PC-3 (cell line): ENCODE measurements at regions of chr19 and their contacts with region 1.

Region 1: GRCh38 chr19:44002566-44003460 is at the start of gene ZNF230:
- DNase-seq: peak; percentile 93
- ATAC-seq: peak; percentile 97
- H3K4me3 ChIP-seq: peak within 1 kb of the TSS; percentile 81
- H3K27ac ChIP-seq: no peak within 1 kb of the TSS
- H3K4me1 ChIP-seq: no peaks in the 10 kb centered on the region
- H3K27me3 ChIP-seq: no peaks in the 10 kb centered on the region
- CTCF ChIP-seq: no peak
- total RNA-seq, gene ZNF230: 0.52 and 1.0 TPM in 2 replicates

Region 2: DNA sequence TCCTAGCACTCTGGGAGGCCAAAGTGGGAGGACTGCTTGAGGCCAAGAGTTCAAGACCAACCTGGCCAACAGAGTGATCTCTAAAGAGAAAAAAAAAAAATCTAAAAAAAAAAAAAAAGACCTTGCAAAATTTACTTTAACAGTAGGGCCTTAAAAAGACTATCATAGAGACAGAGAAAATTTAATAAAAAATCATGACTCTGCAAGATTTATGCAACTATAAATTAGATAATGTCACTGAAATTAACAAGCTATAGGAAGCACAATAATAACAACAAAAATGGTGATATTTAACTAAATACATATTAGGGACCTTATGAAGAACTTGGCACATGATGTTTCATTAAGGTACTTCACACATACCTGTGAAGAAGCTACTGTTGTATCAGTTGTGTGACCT is 78.9 kb before region 1 on chr19:
- CTCF ChIA-PET with region 1: no interaction called
- POLR2A ChIA-PET with region 1: no interaction called
- intact Hi-C with region 1: no loop called
- DNase-seq: no peak
- ATAC-seq: no peak
- H3K4me3 ChIP-seq: no peak overlapping the region
- H3K27ac ChIP-seq: no peak overlapping the region
- H3K4me1 ChIP-seq: no peaks in the 10 kb centered on the region
- H3K27me3 ChIP-seq: no peaks in the 10 kb centered on the region
- CTCF ChIP-seq: no peak

Region 3: GRCh38 chr19:43983912-43984686 is 18.7 kb before region 1 on chr19 and contains the start of gene ZNF155:
- CTCF ChIA-PET with region 1: no interaction called
- POLR2A ChIA-PET with region 1: no interaction called
- intact Hi-C with region 1: loop called (anchors 2 kb)
- DNase-seq: peak; percentile 92
- ATAC-seq: peak; percentile 99
- H3K4me3 ChIP-seq: peak within 1 kb of the TSS; percentile 81
- H3K27ac ChIP-seq: no peak within 1 kb of the TSS
- H3K4me1 ChIP-seq: no peaks in the 10 kb centered on the region
- H3K27me3 ChIP-seq: no peaks in the 10 kb centered on the region
- CTCF ChIP-seq: no peak
- total RNA-seq, gene ZNF155: 3.1 and 4.4 TPM in 2 replicates

Region 4: DNA sequence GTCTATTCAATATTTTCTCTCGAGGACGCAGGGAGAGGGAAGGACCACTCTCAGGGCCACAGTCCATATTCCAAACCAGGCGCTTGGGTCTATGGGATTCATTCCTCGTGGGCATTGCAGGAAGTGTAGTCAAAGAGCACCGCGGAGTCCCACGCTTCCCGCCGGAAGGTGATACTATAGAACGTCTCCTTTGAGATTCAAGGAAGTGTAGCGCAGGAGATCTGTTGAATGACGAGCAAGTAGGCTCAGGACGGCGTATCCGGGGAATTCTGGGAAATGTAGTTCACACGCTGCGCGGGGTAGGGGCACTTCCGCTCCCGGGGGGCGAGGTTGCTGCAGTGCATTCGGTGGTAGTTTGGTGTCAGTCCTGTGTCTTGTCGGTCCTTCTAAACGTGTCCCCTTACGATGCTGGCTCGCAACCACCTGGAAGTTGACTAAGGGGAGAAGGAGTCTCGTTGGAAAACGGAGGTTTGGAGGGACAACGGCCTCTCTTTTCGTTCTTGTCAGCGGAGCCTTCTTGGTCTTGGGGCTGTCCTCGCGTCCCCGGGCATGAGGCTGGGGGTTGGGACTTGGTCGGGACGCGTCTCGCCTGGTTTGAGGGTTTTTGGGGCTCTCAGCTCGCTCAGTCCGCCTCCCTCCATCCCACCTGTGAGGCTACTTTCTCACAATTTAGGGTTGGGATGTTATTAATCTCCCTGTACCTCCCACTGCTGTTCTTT is 69.2 kb after region 1 on chr19 and contains the start of gene ZNF284:
- CTCF ChIA-PET with region 1: no interaction called
- POLR2A ChIA-PET with region 1: no interaction called
- intact Hi-C with region 1: loop called (anchors 2 kb)
- DNase-seq: peak; percentile 83
- ATAC-seq: peak; percentile 99
- H3K4me3 ChIP-seq: peak within 1 kb of the TSS; percentile 82
- H3K27ac ChIP-seq: no peak within 1 kb of the TSS
- H3K4me1 ChIP-seq: peaks cover 8% of the 10 kb centered on the region; the same call in 1 of the 2 replicates
- H3K27me3 ChIP-seq: no peaks in the 10 kb centered on the region
- CTCF ChIP-seq: no peak
- total RNA-seq, gene ZNF284: 0.69 and 0.81 TPM in 2 replicates